ENCODE measurements at regions of chr4 and their contacts with region 1.

Region 1: DNA sequence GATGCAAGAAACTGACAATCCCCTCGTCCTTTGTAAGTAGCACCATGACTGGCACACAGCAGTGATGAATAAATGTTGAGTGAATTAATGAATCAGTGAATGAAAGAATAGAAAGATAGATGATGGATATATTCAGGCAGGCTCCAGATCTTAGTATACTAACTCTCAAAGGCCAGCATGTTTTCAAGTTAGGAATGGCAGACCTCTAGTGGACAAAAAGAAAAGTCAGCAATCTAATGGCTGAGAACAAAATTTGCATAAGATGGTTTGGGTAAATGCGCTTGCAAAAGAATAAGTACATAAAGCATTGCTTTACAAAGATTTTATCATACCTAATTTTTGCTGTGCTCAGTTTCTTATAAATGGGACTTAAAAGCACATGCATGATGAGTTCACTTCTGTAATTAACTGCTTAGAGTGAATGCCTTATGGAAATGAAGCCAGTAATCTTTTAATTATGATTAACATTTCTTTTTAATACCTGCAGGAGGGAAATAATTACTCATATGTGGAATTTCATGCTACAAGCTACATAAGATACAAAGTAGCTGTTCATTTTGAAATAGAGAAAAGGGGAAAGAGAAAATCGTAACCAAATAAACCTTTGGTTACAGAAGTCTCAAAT is 126.9 kb upstream of the GPRIN3 start:
- DNase-seq: no peak
- H3K4me3 ChIP-seq: no peak overlapping the region
- H3K27ac ChIP-seq: no peak overlapping the region
- H3K4me1 ChIP-seq: no peaks in the 10 kb centered on the region
- H3K27me3 ChIP-seq: no peaks in the 10 kb centered on the region
- CTCF ChIP-seq: peak; percentile 65

Region 2: GRCh38 chr4:88523325-88524129 is 910.9 kb before region 1 on chr4 and contains the start of gene PYURF:
- CTCF ChIA-PET with region 1: no interaction called
- POLR2A ChIA-PET with region 1: no interaction called
- intact Hi-C with region 1: loop called (anchors 10 kb)
- DNase-seq: peak; percentile 80 to 87
- H3K4me3 ChIP-seq: peak within 1 kb of the TSS; percentile 85
- H3K27ac ChIP-seq: peak within 1 kb of the TSS; percentile 73
- H3K4me1 ChIP-seq: peaks cover 26% of the 10 kb centered on the region
- H3K27me3 ChIP-seq: no peaks in the 10 kb centered on the region
- CTCF ChIP-seq: no peak
- total RNA-seq, gene PYURF: 53.3 and 55.0 TPM in 2 replicates

Region 3: GRCh38 chr4:89158884-89159503 is 275.5 kb before region 1 on chr4:
- CTCF ChIA-PET with region 1: no interaction called
- POLR2A ChIA-PET with region 1: no interaction called
- intact Hi-C with region 1: loop called (anchors 2 kb)
- DNase-seq: peak in 1 of 2 experiments; percentile 36
- H3K4me3 ChIP-seq: no peak overlapping the region
- H3K27ac ChIP-seq: no peak overlapping the region
- H3K4me1 ChIP-seq: no peaks in the 10 kb centered on the region
- H3K27me3 ChIP-seq: no peaks in the 10 kb centered on the region
- CTCF ChIP-seq: peak; percentile 80

Region 4: GRCh38 chr4:89226665-89227574 is 207.6 kb before region 1 on chr4:
- CTCF ChIA-PET with region 1: no interaction called
- POLR2A ChIA-PET with region 1: no interaction called
- intact Hi-C with region 1: loop called (anchors 1 kb)
- DNase-seq: peak; percentile 34 to 49
- H3K4me3 ChIP-seq: no peak overlapping the region
- H3K27ac ChIP-seq: no peak overlapping the region
- H3K4me1 ChIP-seq: peaks cover 5% of the 10 kb centered on the region
- H3K27me3 ChIP-seq: no peaks in the 10 kb centered on the region
- CTCF ChIP-seq: peak; percentile 68

Region 5: GRCh38 chr4:89899854-89900253 is 465.4 kb after region 1 on chr4:
- CTCF ChIA-PET with region 1: no interaction called
- POLR2A ChIA-PET with region 1: no interaction called
- intact Hi-C with region 1: loop called (anchors 2 kb)
- DNase-seq: no peak
- H3K4me3 ChIP-seq: no peak overlapping the region
- H3K27ac ChIP-seq: no peak overlapping the region
- H3K4me1 ChIP-seq: no peaks in the 10 kb centered on the region
- H3K27me3 ChIP-seq: no peaks in the 10 kb centered on the region
- CTCF ChIP-seq: no peak